ENCODE measurements at regions of chr12 and their contacts with region 1.

Region 1: DNA sequence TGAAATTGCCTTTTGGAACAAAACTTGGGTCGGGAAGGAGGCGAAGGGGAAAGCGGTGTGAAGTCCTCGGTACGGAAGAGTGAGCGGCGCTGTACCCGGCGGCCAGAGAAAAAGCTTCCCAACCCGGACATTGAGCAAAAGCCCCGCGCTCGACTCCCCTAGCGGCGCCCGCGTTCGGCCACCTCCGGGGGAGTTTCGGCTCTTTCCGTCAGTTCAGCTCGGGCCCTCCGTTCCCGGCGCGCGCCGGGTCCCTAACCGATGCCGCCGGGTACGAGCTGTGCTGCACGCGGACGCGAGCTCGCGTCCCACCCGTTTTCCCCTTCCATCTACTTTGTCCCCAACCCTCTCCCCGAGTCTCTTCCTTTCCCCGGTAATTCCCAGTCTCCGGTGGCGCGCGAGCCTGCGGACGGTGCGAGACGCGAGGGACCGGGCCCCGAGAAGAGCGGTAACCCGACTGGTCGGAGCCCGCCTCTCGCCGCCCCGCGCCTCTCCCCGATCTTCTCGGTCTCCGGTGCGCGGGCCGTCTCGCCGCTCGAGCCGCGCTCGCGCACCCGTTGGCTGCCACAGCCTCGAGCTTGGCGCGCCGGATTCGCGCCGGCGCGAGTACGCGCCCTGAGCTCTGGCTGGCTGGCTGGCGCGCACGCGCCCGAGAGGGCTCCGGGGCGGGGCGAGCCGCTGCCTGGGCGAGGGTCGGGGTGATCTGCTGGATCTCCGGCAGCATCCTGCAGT is 446 bp upstream of the SPATS2 start:
- DNase-seq: peak; percentile 74 to 91 (median 84)
- ATAC-seq: peak; percentile 83
- H3K4me3 ChIP-seq: peak overlapping the region; percentile 91 to 100
- H3K4me3 Mint-ChIP-seq: peak overlapping the region; percentile 96
- H3K27ac ChIP-seq: peak overlapping the region; percentile 79 to 85
- H3K27ac Mint-ChIP-seq: peak overlapping the region; percentile 91
- H3K4me1 ChIP-seq: peaks cover 16% of the 10 kb centered on the region
- H3K4me1 Mint-ChIP-seq: peaks cover 31% of the 10 kb centered on the region
- H3K27me3 ChIP-seq: no peaks in the 10 kb centered on the region
- H3K27me3 Mint-ChIP-seq: no peaks in the 10 kb centered on the region
- CTCF ChIP-seq: no peak

Region 2: GRCh38 chr12:49538510-49539403 is 171.9 kb after region 1 on chr12 and contains the start of gene KCNH3:
- CTCF ChIA-PET with region 1: no interaction called
- POLR2A ChIA-PET with region 1: interaction called, 3 read pairs
- intact Hi-C with region 1: loop called in 1 of 2 experiments (anchors 1 kb)
- DNase-seq: peak; percentile 79 to 95 (median 91)
- ATAC-seq: peak; percentile 90
- H3K4me3 ChIP-seq: peak within 1 kb of the TSS; percentile 49 to 76
- H3K4me3 Mint-ChIP-seq: peak within 1 kb of the TSS; percentile 80
- H3K27ac ChIP-seq: no peak within 1 kb of the TSS
- H3K27ac Mint-ChIP-seq: no peak within 1 kb of the TSS
- H3K4me1 ChIP-seq: peaks cover 23% of the 10 kb centered on the region
- H3K4me1 Mint-ChIP-seq: peaks cover 33% of the 10 kb centered on the region
- H3K27me3 ChIP-seq: peaks cover 0 to 6% of the 10 kb centered on the region in 2 experiments
- H3K27me3 Mint-ChIP-seq: no peaks in the 10 kb centered on the region
- CTCF ChIP-seq: no peak
- total RNA-seq, gene KCNH3: 3.1 to 3.5 TPM

Region 3: GRCh38 chr12:49828133-49829091 is 461.6 kb after region 1 on chr12 and contains the start of gene NCKAP5L:
- CTCF ChIA-PET with region 1: no interaction called
- POLR2A ChIA-PET with region 1: no interaction called
- intact Hi-C with region 1: loop called in 1 of 2 experiments (anchors 10 kb)
- DNase-seq: peak; percentile 86 to 96 (median 94)
- ATAC-seq: peak; percentile 97
- H3K4me3 ChIP-seq: peak within 1 kb of the TSS; percentile 68 to 91
- H3K4me3 Mint-ChIP-seq: peak within 1 kb of the TSS; percentile 97
- H3K27ac ChIP-seq: peak within 1 kb of the TSS; percentile 65 to 69
- H3K27ac Mint-ChIP-seq: peak within 1 kb of the TSS; percentile 97
- H3K4me1 ChIP-seq: peaks cover 15% of the 10 kb centered on the region
- H3K4me1 Mint-ChIP-seq: peaks cover 39% of the 10 kb centered on the region
- H3K27me3 ChIP-seq: no peaks in the 10 kb centered on the region
- H3K27me3 Mint-ChIP-seq: no peaks in the 10 kb centered on the region
- CTCF ChIP-seq: no peak
- total RNA-seq, gene NCKAP5L: 10.6 to 10.7 TPM